ENCODE measurements at regions of chr9 and their contacts with region 1.

Region 1: GRCh38 chr9:98998441-98999151 is 54.9 kb downstream of the COL15A1 start:
- DNase-seq: peak in 1 of 2 experiments; percentile 67
- H3K4me3 ChIP-seq: no peak overlapping the region
- H3K27ac ChIP-seq: no peak overlapping the region
- H3K4me1 ChIP-seq: no peaks in the 10 kb centered on the region
- H3K27me3 ChIP-seq: no peaks in the 10 kb centered on the region
- CTCF ChIP-seq: peak; percentile 88

Region 2: GRCh38 chr9:97848582-97849237 is 1149.9 kb before region 1 on chr9:
- CTCF ChIA-PET with region 1: interaction called, 10 read pairs
- POLR2A ChIA-PET with region 1: no interaction called
- intact Hi-C with region 1: no loop called
- DNase-seq: no peak
- H3K4me3 ChIP-seq: no peak overlapping the region
- H3K27ac ChIP-seq: no peak overlapping the region
- H3K4me1 ChIP-seq: peaks cover 6% of the 10 kb centered on the region; the same call in 1 of the 2 replicates
- H3K27me3 ChIP-seq: no peaks in the 10 kb centered on the region
- CTCF ChIP-seq: no peak

Region 3: GRCh38 chr9:98823666-98824334 is 174.8 kb before region 1 on chr9:
- CTCF ChIA-PET with region 1: no interaction called
- POLR2A ChIA-PET with region 1: no interaction called
- intact Hi-C with region 1: no loop called
- DNase-seq: no peak
- H3K4me3 ChIP-seq: no peak overlapping the region
- H3K27ac ChIP-seq: no peak overlapping the region
- H3K4me1 ChIP-seq: no peaks in the 10 kb centered on the region
- H3K27me3 ChIP-seq: no peaks in the 10 kb centered on the region
- CTCF ChIP-seq: no peak

Region 4: GRCh38 chr9:98838155-98838867 is 160.3 kb before region 1 on chr9:
- CTCF ChIA-PET with region 1: interaction called, 12 read pairs
- POLR2A ChIA-PET with region 1: no interaction called
- intact Hi-C with region 1: no loop called
- DNase-seq: no peak
- H3K4me3 ChIP-seq: no peak overlapping the region
- H3K27ac ChIP-seq: no peak overlapping the region
- H3K4me1 ChIP-seq: no peaks in the 10 kb centered on the region
- H3K27me3 ChIP-seq: no peaks in the 10 kb centered on the region
- CTCF ChIP-seq: no peak

Region 5: GRCh38 chr9:98855592-98855991 is 143.0 kb before region 1 on chr9:
- CTCF ChIA-PET with region 1: interaction called, 14 read pairs
- POLR2A ChIA-PET with region 1: no interaction called
- intact Hi-C with region 1: no loop called
- DNase-seq: peak in 1 of 2 experiments; percentile 16
- H3K4me3 ChIP-seq: no peak overlapping the region
- H3K27ac ChIP-seq: no peak overlapping the region
- H3K4me1 ChIP-seq: peaks cover 21% of the 10 kb centered on the region
- H3K27me3 ChIP-seq: no peaks in the 10 kb centered on the region
- CTCF ChIP-seq: no peak

Region 6: GRCh38 chr9:99104459-99105151 is 106.0 kb after region 1 on chr9 and contains the start of gene TGFBR1:
- CTCF ChIA-PET with region 1: no interaction called
- POLR2A ChIA-PET with region 1: interaction called, 4 read pairs
- intact Hi-C with region 1: loop called (anchors 2 kb)
- DNase-seq: peak; percentile 77 to 97
- H3K4me3 ChIP-seq: peak within 1 kb of the TSS; percentile 76
- H3K27ac ChIP-seq: no peak within 1 kb of the TSS
- H3K4me1 ChIP-seq: peaks cover 17% of the 10 kb centered on the region
- H3K27me3 ChIP-seq: no peaks in the 10 kb centered on the region
- CTCF ChIP-seq: no peak
- total RNA-seq, gene TGFBR1: 17.1 and 18.3 TPM in 2 replicates

Region 7: DNA sequence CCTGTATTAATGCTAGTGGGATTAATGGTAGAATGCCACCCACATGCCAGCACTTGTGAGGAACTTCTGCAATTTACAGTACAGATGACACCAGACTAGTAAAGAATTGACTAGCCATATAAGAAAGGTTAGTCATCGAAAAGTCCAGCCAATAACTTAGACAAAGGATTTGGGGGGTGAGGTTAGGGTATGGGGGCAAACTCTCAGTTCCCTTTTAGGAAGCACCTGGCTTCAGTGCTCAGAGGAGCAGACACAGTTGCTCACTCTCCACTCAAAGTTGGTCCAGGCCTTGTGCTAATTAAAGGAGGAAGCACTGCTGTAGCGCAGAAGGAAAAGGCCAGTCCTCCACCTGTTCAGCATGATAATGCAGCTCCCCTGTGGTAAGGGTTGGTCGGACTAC is 131.5 kb after region 1 on chr9:
- CTCF ChIA-PET with region 1: no interaction called
- POLR2A ChIA-PET with region 1: no interaction called
- intact Hi-C with region 1: no loop called
- DNase-seq: no peak
- H3K4me3 ChIP-seq: no peak overlapping the region
- H3K27ac ChIP-seq: no peak overlapping the region
- H3K4me1 ChIP-seq: peaks cover 14% of the 10 kb centered on the region
- H3K27me3 ChIP-seq: no peaks in the 10 kb centered on the region
- CTCF ChIP-seq: no peak

Region 8: GRCh38 chr9:99868845-99869244 is 870.2 kb after region 1 on chr9:
- CTCF ChIA-PET with region 1: no interaction called
- POLR2A ChIA-PET with region 1: no interaction called
- intact Hi-C with region 1: loop called (anchors 10 kb)
- DNase-seq: no peak
- H3K4me3 ChIP-seq: no peak overlapping the region
- H3K27ac ChIP-seq: no peak overlapping the region
- H3K4me1 ChIP-seq: peaks cover 19% of the 10 kb centered on the region
- H3K27me3 ChIP-seq: no peaks in the 10 kb centered on the region
- CTCF ChIP-seq: no peak

Measured in PC-9 (cell line).